HEK293 (cell line): ENCODE measurements at regions of chr2 and their contacts with region 1.

Region 1: GRCh38 chr2:85066874-85067351 is 66.3 kb upstream of the TCF7L1 start:
- H3K4me3 ChIP-seq: no peak overlapping the region
- H3K27ac ChIP-seq: no peak overlapping the region
- H3K4me1 ChIP-seq: no peaks in the 10 kb centered on the region
- CTCF ChIP-seq: peak; percentile 51

Region 2: DNA sequence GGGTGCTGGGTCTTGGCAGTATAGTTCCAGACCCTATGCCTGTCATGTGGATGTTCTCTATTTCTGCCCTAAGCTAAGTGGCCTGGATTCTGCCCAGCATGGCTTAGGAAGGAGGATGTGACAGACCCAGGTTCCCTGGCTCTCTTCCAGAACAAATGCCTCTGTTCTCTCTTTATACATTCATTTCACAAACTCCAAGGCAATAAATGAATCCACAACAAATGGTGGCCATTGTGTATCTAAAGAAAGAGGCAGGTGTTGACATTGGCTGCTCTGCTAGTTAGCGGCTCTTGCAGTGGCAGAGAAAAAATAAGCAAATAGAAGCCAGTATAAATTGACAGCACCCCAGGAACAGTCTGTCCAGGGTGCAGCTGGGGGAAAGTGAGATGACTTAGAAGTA is 906.5 kb before region 1 on chr2:
- CTCF ChIA-PET with region 1: no interaction called
- POLR2A ChIA-PET with region 1: no interaction called
- H3K4me3 ChIP-seq: no peak overlapping the region
- H3K27ac ChIP-seq: no peak overlapping the region
- H3K4me1 ChIP-seq: no peaks in the 10 kb centered on the region
- CTCF ChIP-seq: no peak

Region 3: GRCh38 chr2:85048534-85048933 is 18.4 kb before region 1 on chr2:
- CTCF ChIA-PET with region 1: interaction called, 19 read pairs
- POLR2A ChIA-PET with region 1: no interaction called
- H3K4me3 ChIP-seq: no peak overlapping the region
- H3K27ac ChIP-seq: no peak overlapping the region
- H3K4me1 ChIP-seq: no peaks in the 10 kb centered on the region
- CTCF ChIP-seq: no peak

Region 4: DNA sequence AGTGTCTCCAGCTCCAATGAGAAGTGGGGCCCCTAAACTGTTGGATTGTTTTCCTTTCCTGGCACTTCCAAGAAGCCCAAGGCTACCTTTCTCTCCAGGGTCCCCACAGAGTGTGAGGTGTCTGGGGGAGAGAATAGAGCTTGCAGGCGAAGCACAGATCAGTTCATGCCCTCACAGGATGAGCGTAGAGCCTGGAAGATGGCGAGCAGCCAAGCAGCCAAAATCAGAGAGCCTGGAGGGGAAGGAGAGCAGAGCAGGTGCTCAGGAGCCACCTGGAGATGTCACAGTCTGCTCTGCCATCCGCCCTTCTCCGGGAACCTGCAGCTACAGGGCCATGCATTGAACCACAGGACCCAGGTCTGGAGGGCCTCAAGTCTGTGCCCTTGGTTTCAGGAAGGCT is 11.6 kb after region 1 on chr2:
- CTCF ChIA-PET with region 1: interaction called, 14 read pairs
- POLR2A ChIA-PET with region 1: no interaction called
- H3K4me3 ChIP-seq: no peak overlapping the region
- H3K27ac ChIP-seq: no peak overlapping the region
- H3K4me1 ChIP-seq: no peaks in the 10 kb centered on the region
- CTCF ChIP-seq: no peak

Region 5: DNA sequence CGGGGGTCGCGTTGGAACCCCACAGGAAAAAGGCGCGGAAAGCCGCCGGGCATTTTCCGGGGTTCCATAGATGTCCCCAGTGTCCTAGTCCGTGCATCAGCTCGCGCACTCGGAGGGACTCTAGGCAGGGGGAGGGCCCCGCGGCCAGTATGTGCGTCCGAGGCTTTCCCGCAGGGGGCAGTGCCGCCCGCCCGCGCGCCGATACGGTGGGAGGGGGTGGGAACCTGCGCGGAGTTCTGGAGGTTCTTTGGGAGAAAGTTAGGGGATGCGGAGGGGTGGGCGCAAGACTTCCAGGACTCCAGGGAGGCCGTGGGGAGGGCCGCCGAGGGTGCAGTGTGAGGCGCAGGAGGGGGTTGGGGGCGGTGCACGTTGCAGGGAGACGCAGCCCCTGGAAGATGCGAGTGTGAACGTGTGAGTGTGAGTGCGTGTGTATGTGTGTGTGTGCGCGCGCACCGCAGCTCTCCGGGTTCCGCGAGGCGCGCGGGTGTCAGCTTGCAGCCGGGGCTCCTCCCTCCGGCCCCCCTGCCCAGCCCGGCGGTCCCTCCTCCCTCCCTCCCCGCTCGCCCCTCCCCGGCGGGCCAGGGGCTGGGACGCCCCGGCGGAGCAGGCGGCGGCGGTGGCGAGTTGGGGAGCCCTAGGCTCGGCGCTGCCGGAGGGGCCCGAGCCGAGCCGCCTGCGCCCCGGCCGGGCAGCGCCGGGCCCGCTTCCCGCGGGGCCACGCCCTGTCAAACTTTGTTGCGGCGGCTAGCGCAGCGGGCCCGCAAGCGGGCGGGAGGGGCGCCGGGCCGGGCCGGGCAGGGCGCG is 66.1 kb after region 1 on chr2 and contains the start of gene TCF7L1:
- CTCF ChIA-PET with region 1: interaction called, 21 read pairs
- POLR2A ChIA-PET with region 1: interaction called, 5 read pairs
- H3K4me3 ChIP-seq: peak within 1 kb of the TSS; percentile 58
- H3K27ac ChIP-seq: peak within 1 kb of the TSS; percentile 41; the same call in 1 of the 2 replicates
- H3K4me1 ChIP-seq: peaks cover 3% of the 10 kb centered on the region; the same call in 1 of the 2 replicates
- CTCF ChIP-seq: peak; percentile 91

Region 6: GRCh38 chr2:85266146-85267041 is 199.5 kb after region 1 on chr2:
- CTCF ChIA-PET with region 1: interaction called, 10 read pairs
- POLR2A ChIA-PET with region 1: no interaction called
- H3K4me3 ChIP-seq: no peak overlapping the region
- H3K27ac ChIP-seq: no peak overlapping the region
- H3K4me1 ChIP-seq: no peaks in the 10 kb centered on the region
- CTCF ChIP-seq: no peak

Region 7: GRCh38 chr2:85288244-85288725 is 221.4 kb after region 1 on chr2:
- CTCF ChIA-PET with region 1: interaction called, 137 read pairs
- POLR2A ChIA-PET with region 1: interaction called, 4 read pairs
- H3K4me3 ChIP-seq: no peak overlapping the region
- H3K27ac ChIP-seq: no peak overlapping the region
- H3K4me1 ChIP-seq: no peaks in the 10 kb centered on the region
- CTCF ChIP-seq: no peak